Panc1 (cell line): ENCODE measurements at regions of chr7 and their contacts with region 1.

Region 1: DNA sequence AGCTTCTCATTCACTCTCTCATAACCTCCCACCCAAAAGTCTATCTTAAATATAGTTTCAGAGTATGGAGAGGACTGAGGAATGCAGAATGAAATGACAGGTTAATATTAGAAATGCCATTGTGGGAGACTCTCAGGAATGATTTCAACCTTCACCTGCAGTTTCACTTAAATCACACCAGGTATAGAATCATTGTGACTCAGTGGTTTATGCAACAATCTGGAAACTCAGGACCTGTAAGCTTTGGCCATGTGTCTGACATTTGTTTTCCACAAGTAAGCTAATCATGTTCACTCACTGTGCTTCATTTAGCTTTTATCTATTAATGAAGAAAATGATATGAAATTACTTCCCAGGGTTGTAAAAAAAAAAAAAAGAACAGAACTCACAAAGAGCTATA is 8.7 kb upstream of the PTPN12 start:
- DNase-seq: no peak
- ATAC-seq: no peak
- H3K4me3 ChIP-seq: no peak overlapping the region
- H3K27ac ChIP-seq: no peak overlapping the region
- H3K4me1 ChIP-seq: no peaks in the 10 kb centered on the region
- H3K27me3 ChIP-seq: no peaks in the 10 kb centered on the region
- CTCF ChIP-seq: no peak

Region 2: GRCh38 chr7:77540402-77540822 is 12.0 kb after region 1 on chr7:
- CTCF ChIA-PET with region 1: no interaction called
- POLR2A ChIA-PET with region 1: interaction called, 12 read pairs
- in situ Hi-C with region 1: no loop called
- intact Hi-C with region 1: no loop called
- DNase-seq: no peak
- ATAC-seq: no peak
- H3K4me3 ChIP-seq: peak overlapping the region in 1 of 2 experiments; percentile 100; a peak in 3 of 4 replicates
- H3K27ac ChIP-seq: peak overlapping the region; percentile 99
- H3K4me1 ChIP-seq: peaks cover 37% of the 10 kb centered on the region
- H3K27me3 ChIP-seq: no peaks in the 10 kb centered on the region
- CTCF ChIP-seq: no peak

Region 3: DNA sequence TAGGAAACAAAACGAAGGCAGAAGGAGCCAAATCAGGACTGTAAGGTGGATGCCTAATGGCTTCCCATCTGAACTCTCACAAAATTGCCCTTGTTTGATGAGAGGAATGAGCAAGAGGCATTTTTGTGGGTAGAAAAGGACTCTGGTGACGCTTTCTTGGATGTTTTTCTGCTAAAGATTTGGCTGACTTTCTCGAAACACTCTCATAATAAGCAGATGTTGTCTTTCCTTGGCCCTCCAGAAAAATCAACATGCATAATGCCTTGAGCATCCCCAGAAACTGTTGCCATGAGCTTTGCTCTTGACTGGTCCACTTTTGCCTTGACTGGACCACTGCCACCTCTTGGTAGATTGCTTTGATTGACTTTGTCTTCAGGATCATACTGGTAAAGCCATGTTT is 22.2 kb after region 1 on chr7:
- CTCF ChIA-PET with region 1: no interaction called
- POLR2A ChIA-PET with region 1: no interaction called
- in situ Hi-C with region 1: no loop called
- intact Hi-C with region 1: no loop called
- DNase-seq: no peak
- ATAC-seq: no peak
- H3K4me3 ChIP-seq: no peak overlapping the region
- H3K27ac ChIP-seq: no peak overlapping the region
- H3K4me1 ChIP-seq: peaks cover 12% of the 10 kb centered on the region; the same call in 1 of the 2 replicates
- H3K27me3 ChIP-seq: no peaks in the 10 kb centered on the region
- CTCF ChIP-seq: no peak

Region 4: DNA sequence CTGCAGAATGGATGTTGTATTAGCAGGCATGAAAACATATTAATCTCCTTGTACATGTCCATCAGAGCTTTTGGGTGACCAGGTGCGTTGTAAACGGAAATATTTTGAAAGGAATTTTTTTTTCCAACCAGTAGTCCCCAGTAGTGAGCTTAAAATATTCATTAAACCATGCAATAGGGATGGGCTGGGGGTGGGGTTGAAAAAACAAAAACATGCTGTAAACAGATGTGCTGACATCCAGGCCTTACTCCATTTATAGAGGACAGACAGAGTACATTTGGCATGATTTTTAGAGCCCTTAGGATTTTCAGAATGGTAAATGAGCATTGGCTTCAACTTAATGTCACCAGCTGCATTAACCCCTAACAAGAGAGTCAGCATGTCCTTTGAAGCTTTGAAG is 58.9 kb after region 1 on chr7:
- CTCF ChIA-PET with region 1: no interaction called
- POLR2A ChIA-PET with region 1: no interaction called
- in situ Hi-C with region 1: no loop called
- intact Hi-C with region 1: no loop called
- DNase-seq: no peak
- ATAC-seq: no peak
- H3K4me3 ChIP-seq: no peak overlapping the region
- H3K27ac ChIP-seq: no peak overlapping the region
- H3K4me1 ChIP-seq: no peaks in the 10 kb centered on the region
- H3K27me3 ChIP-seq: no peaks in the 10 kb centered on the region
- CTCF ChIP-seq: no peak